ENCODE measurements at regions of chr12 and their contacts with region 1.

Region 1: DNA sequence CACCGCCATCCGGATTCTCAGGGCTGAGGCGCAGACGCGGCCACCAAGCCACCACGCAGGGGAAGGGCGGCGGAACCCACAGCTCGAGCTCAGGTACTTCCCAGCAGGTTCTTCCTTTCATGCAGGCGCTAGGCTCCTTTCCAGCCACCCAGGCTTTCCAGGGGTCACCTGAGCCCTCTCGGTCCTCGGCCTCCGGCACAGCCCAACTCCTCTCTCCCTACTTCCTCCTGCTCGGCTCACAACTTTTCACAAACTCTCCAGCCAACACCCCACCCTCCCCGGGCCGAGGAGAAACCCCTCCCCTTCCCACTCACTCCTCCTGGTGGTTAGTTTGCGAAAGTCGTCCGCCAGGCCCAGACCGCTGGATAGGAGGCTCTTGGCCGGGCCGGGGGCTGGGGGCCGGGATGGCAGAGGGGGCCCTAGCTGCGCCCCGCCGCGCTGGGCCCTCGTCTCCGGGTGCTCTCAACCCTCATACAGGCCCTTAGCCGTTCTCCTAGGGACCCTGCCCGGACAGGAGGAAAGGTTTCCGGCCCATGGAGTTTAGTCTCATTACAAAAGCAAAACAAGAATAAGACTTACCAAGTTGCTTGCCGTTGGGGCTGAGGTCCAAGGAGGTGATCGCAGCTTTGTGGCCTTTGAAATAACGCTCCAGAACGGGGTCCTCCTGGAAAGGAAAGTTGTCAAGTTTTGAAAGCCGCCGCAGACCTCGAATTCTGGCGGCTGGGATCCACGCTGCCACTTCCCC is at the start of gene GALNT4:
- DNase-seq: peak; percentile 50 to 84 (median 76)
- H3K4me3 ChIP-seq: peak within 1 kb of the TSS; percentile 67 to 99 (median 92)
- H3K27ac ChIP-seq: peak within 1 kb of the TSS; percentile 86 to 99 (median 94)
- H3K27me3 ChIP-seq: no peaks in the 10 kb centered on the region
- CTCF ChIP-seq: peak in 55 of 56 donors; percentile 26 to 80 (median 62)
- total RNA-seq, gene GALNT4: 1.1 to 6.8 (median 3.4) TPM

Region 2: GRCh38 chr12:88141770-88142609 is 1382.7 kb before region 1 on chr12 and contains the starts of genes CEP290 and TMTC3:
- intact Hi-C with region 1: loop called in 1 of 2 experiments (anchors 10 kb)
- DNase-seq: peak; percentile 95 to 100 (median 98)
- H3K4me3 ChIP-seq: peak within 1 kb of the TSS; percentile 72 to 99 (median 90)
- H3K27ac ChIP-seq: peak within 1 kb of the TSS in 58 of 59 donors; percentile 47 to 93 (median 82)
- H3K27me3 ChIP-seq: no peaks in the 10 kb centered on the region
- CTCF ChIP-seq: peak in 41 of 56 donors; percentile 3 to 61 (median 30)
- total RNA-seq, gene CEP290: 23.5 to 46.5 (median 32.0) TPM
- total RNA-seq, gene TMTC3: 17.1 to 33.1 (median 23.9) TPM

Region 3: GRCh38 chr12:89019408-89020120 is 505.1 kb before region 1 on chr12:
- intact Hi-C with region 1: loop called (anchors 2 to 5 kb)
- DNase-seq: peak; percentile 24 to 89 (median 77)
- H3K4me3 ChIP-seq: peak overlapping the region; percentile 11 to 71 (median 50)
- H3K27ac ChIP-seq: peak overlapping the region in 3 of 59 donors; percentile 22 to 53 (median 49)
- H3K27me3 ChIP-seq: no peaks in the 10 kb centered on the region
- CTCF ChIP-seq: peak; percentile 46 to 95 (median 83)

Region 4: GRCh38 chr12:89051065-89051677 is 473.5 kb before region 1 on chr12:
- intact Hi-C with region 1: loop called in 1 of 2 experiments (anchors 10 kb)
- DNase-seq: no peak
- H3K4me3 ChIP-seq: no peak overlapping the region
- H3K27ac ChIP-seq: no peak overlapping the region
- H3K27me3 ChIP-seq: no peaks in the 10 kb centered on the region
- CTCF ChIP-seq: peak; percentile 80 to 98 (median 91)

Region 5: GRCh38 chr12:89352492-89353187 is 172.1 kb before region 1 on chr12 and contains the start of gene DUSP6:
- intact Hi-C with region 1: loop called (anchors 5 kb)
- DNase-seq: peak; percentile 79 to 98 (median 93)
- H3K4me3 ChIP-seq: peak within 1 kb of the TSS; percentile 44 to 93 (median 84)
- H3K27ac ChIP-seq: peak within 1 kb of the TSS; percentile 40 to 98 (median 91)
- H3K27me3 ChIP-seq: peaks cover 0 to 7% (median 0%) of the 10 kb centered on the region in 45 donors
- CTCF ChIP-seq: peak in 1 of 56 donors; percentile 15
- total RNA-seq, gene DUSP6: 8.1 to 87.8 (median 26.2) TPM

Region 6: GRCh38 chr12:89470741-89471509 is 53.8 kb before region 1 on chr12:
- intact Hi-C with region 1: loop called (anchors 1 to 2 kb)
- DNase-seq: no peak
- H3K4me3 ChIP-seq: no peak overlapping the region
- H3K27ac ChIP-seq: peak overlapping the region in 32 of 59 donors; percentile 2 to 87 (median 44)
- H3K27me3 ChIP-seq: no peaks in the 10 kb centered on the region
- CTCF ChIP-seq: peak; percentile 49 to 99 (median 79)

Region 7: DNA sequence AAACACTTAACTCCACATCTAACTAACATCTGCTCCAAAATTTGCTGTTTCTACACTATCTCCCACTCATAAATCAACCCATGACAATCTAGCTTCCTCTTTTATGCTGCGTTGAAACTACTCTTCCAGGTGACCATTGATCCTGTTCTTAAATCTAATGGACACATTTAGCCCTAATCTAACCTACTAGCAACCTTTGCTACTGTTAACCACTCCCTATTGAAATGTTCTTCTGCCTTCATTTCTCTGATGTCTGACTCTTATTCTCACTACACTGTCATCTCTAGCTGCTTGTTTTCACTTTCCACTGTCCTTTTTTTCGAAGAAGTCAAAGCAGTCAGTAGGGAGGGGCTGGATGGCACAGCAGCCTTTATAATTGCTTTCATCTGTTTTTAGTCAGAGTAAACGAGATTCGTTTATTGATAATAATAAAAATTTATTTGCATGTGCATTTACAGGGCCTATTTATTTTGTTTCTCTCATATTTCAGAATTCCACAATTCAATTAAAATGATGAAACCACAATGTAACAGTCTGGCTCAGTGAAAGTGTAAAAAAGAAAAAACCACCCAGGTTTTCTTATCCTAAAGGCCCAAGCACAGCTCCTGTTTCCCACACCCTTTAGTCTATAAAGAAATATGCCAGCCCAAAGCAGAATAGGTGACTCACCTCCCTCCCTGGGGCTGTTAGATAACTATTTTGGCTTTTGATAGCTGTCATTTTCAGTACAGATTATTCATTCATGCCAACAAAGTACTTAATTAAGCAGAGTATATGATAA is 139.1 kb after region 1 on chr12:
- intact Hi-C with region 1: no loop called
- DNase-seq: no peak
- H3K4me3 ChIP-seq: peak overlapping the region in 1 of 59 donors; percentile 9
- H3K27ac ChIP-seq: peak overlapping the region in 41 of 59 donors; percentile 0 to 77 (median 44)
- H3K27me3 ChIP-seq: no peaks in the 10 kb centered on the region
- CTCF ChIP-seq: no peak

Region 8: GRCh38 chr12:89709157-89709994 is 184.7 kb after region 1 on chr12:
- intact Hi-C with region 1: loop called in 1 of 2 experiments (anchors 5 kb)
- DNase-seq: peak; percentile 95 to 98 (median 96)
- H3K4me3 ChIP-seq: peak overlapping the region; percentile 64 to 99 (median 91)
- H3K27ac ChIP-seq: peak overlapping the region; percentile 73 to 100 (median 98)
- H3K27me3 ChIP-seq: no peaks in the 10 kb centered on the region
- CTCF ChIP-seq: peak in 19 of 56 donors; percentile 5 to 51 (median 15)

Measured in dorsolateral prefrontal cortex (tissue), 120 donors.